ENCODE measurements at regions of chr1 and their contacts with region 1.

Region 1: DNA sequence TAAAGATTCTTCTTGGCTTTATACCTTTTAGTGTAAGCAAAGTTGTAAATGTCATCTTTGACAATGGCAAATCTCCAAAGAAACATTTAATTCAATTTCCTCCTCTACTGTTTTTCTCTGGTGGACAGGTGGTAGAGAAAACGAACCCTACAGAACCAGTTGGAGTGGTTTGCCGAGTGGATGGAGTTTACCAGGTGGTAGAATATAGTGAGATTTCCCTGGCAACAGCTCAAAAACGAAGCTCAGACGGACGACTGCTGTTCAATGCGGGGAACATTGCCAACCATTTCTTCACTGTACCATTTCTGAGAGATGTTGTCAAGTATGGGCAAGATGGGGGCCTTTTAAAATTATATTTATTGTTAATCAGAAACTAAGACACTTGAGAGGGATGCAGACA is 25.8 kb downstream of the UAP1 start:
- DNase-seq: no peak
- ATAC-seq: no peak
- H3K4me3 ChIP-seq: no peak overlapping the region
- H3K27ac ChIP-seq: no peak overlapping the region
- H3K4me1 ChIP-seq: no peaks in the 10 kb centered on the region
- H3K27me3 ChIP-seq: no peaks in the 10 kb centered on the region
- CTCF ChIP-seq: no peak

Region 2: DNA sequence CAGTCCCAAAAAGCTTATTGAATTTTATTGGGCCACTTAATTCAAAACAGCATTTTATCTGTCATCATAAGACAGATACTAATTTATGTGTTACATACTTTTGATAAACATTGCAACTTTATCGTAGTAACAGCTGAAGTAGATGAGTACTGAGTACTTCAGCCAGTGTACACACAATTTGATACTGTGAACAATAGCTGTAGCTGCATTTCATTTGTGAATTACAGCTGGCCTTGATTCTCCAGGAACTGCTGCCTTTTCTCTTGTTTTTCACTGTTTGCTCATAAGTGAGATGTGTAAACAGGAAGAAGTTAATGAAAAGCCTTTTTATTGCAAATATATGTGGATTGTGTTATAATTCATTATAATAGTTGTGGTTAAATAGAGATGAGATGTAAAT is 15.7 kb before region 1 on chr1:
- CTCF ChIA-PET with region 1: no interaction called
- POLR2A ChIA-PET with region 1: no interaction called
- in situ Hi-C with region 1: no loop called
- intact Hi-C with region 1: no loop called
- DNase-seq: no peak
- ATAC-seq: no peak
- H3K4me3 ChIP-seq: no peak overlapping the region
- H3K27ac ChIP-seq: no peak overlapping the region
- H3K4me1 ChIP-seq: peaks cover 10% of the 10 kb centered on the region
- H3K27me3 ChIP-seq: no peaks in the 10 kb centered on the region
- CTCF ChIP-seq: no peak

Region 3: DNA sequence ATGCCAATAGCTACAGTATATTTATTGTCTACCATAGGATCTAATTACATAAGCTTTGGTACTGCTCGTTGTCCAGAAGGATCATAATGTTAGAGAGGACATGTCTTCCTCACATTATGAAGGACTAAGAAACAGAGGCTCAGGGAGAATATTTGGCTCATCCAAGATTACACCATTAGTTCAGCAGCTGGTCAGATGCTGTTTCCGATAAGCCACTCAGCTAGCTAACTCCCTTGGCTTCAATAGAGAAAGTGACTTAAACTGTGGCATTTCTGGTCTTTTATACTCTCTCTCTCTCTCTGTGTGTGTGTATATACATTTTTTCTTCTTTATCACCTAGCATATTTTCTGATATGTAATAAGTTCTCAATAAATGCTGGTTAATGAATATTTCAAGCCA is 115.3 kb after region 1 on chr1:
- CTCF ChIA-PET with region 1: no interaction called
- POLR2A ChIA-PET with region 1: interaction called, 14 read pairs
- in situ Hi-C with region 1: no loop called
- intact Hi-C with region 1: no loop called
- DNase-seq: no peak
- ATAC-seq: no peak
- H3K4me3 ChIP-seq: no peak overlapping the region
- H3K27ac ChIP-seq: no peak overlapping the region
- H3K4me1 ChIP-seq: peaks cover 2% of the 10 kb centered on the region; the same call in 1 of the 2 replicates
- H3K27me3 ChIP-seq: no peaks in the 10 kb centered on the region
- CTCF ChIP-seq: no peak

Measured in Panc1 (cell line).